ENCODE measurements at regions of chr14 and their contacts with region 1.

Region 1: GRCh38 chr14:48398675-48399282 is 723.4 kb upstream of the MDGA2 start:
- DNase-seq: peak; percentile 19
- H3K4me3 ChIP-seq: no peak overlapping the region
- H3K27ac ChIP-seq: no peak overlapping the region
- H3K4me1 ChIP-seq: no peaks in the 10 kb centered on the region
- H3K27me3 ChIP-seq: no peaks in the 10 kb centered on the region
- CTCF ChIP-seq: peak; percentile 53 to 56

Region 2: GRCh38 chr14:47040550-47040949 is 1358.2 kb before region 1 on chr14:
- CTCF ChIA-PET with region 1: no interaction called
- dilution Hi-C with region 1: no loop called
- in situ Hi-C with region 1: no loop called
- intact Hi-C with region 1: loop called (anchors 10 kb)
- DNase-seq: peak; percentile 38
- H3K4me3 ChIP-seq: no peak overlapping the region
- H3K27ac ChIP-seq: no peak overlapping the region
- H3K4me1 ChIP-seq: no peaks in the 10 kb centered on the region
- H3K27me3 ChIP-seq: no peaks in the 10 kb centered on the region
- CTCF ChIP-seq: peak in 1 of 2 donors; percentile 44

Region 3: DNA sequence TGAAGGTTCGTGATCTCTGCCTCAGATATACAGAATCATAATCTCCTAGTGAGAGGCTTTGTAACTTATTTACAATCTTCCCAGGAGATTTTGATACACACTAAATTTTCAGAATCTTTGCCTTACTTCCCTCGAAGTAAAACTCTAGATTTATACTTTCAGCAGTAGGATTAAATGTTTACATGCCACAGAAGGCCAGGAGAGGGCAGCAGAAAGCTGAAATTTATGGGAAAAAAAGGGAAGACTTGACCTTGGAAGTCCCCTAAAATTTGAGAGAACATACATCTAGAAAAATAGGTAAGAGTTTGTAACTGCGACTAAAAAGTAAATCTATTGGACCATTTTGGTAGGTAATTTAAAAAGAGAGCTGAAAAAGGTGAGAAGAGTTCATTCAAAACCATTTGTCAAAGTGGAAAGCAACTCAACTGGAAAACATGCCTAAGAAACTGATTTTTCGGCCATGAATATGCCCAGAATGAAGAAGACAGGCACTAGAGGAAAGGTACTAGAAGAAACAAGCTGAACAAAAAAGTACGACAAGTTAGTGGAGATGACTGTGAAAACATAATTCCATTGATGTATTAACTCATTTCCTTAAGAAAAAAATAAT is 481.3 kb before region 1 on chr14:
- CTCF ChIA-PET with region 1: no interaction called
- dilution Hi-C with region 1: no loop called
- in situ Hi-C with region 1: loop called in 1 of 2 experiments (anchors 25 kb)
- intact Hi-C with region 1: loop called (anchors 1 kb)
- DNase-seq: peak; percentile 1
- H3K4me3 ChIP-seq: no peak overlapping the region
- H3K27ac ChIP-seq: no peak overlapping the region
- H3K4me1 ChIP-seq: no peaks in the 10 kb centered on the region
- H3K27me3 ChIP-seq: no peaks in the 10 kb centered on the region
- CTCF ChIP-seq: peak in 1 of 2 donors; percentile 41

Region 4: GRCh38 chr14:49173765-49174373 is 775.1 kb after region 1 on chr14:
- CTCF ChIA-PET with region 1: no interaction called
- dilution Hi-C with region 1: no loop called
- in situ Hi-C with region 1: no loop called
- intact Hi-C with region 1: loop called (anchors 1 kb)
- DNase-seq: peak; percentile 43
- H3K4me3 ChIP-seq: no peak overlapping the region
- H3K27ac ChIP-seq: no peak overlapping the region
- H3K4me1 ChIP-seq: no peaks in the 10 kb centered on the region
- H3K27me3 ChIP-seq: no peaks in the 10 kb centered on the region
- CTCF ChIP-seq: peak; percentile 57 to 75